ENCODE measurements at regions of chr11 and their contacts with region 1.

Region 1: DNA sequence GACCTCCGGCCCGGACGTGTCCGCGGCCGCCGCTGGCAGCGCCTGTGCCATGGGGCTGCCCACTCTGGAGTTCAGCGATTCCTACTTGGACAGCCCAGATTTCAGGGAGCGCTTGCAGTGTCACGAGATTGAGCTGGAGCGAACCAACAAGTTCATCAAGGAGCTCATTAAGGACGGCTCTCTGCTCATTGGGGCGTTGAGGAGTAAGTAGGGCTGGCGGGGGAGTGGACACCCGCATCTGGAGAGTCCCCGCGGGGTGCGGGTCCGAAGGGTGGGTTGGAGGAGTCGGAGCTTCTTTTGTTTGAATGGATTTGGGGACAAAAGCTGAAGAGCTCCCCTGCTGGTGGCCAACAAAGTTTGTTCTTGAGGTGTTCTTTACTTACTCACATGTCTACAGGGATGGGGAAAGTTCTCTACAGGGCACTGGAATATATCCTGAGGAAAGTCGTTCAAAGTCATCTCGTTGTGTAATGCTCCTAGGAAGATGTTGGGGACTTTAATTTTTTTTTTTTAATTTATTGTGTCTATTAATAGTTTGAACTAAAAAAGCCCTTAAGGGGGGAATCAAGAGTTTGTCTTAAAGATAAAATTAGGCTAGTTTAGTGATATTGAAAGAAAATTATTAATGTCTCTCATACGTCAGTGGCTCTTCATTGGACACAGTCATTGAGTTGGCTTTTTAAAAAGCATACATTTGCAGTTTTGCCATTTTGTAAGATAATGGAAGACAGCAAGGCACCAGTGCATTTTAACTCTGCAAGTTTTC is 725 bp downstream of the ARHGAP42 start:
- DNase-seq: peak; percentile 50 to 77 (median 57)
- H3K4me3 ChIP-seq: peak overlapping the region; percentile 59 to 96 (median 80)
- H3K27ac ChIP-seq: peak overlapping the region in 4 of 5 donors; percentile 53 to 79 (median 55)
- H3K4me1 ChIP-seq: peaks cover 0 to 6% of the 10 kb centered on the region in 2 donors
- H3K27me3 ChIP-seq: no peaks in the 10 kb centered on the region
- CTCF ChIP-seq: peak; percentile 47 to 74 (median 61)
- POLR2A ChIP-seq: no peak

Region 2: GRCh38 chr11:100855466-100856067 is 167.8 kb after region 1 on chr11:
- intact Hi-C with region 1: loop called (anchors 5 to 10 kb)
- DNase-seq: no peak
- H3K4me3 ChIP-seq: no peak overlapping the region
- H3K27ac ChIP-seq: no peak overlapping the region
- H3K4me1 ChIP-seq: peaks cover 0 to 6% of the 10 kb centered on the region in 2 donors
- H3K27me3 ChIP-seq: no peaks in the 10 kb centered on the region
- CTCF ChIP-seq: peak; percentile 51 to 81 (median 64)
- POLR2A ChIP-seq: no peak

Region 3: GRCh38 chr11:101061606-101062005 is 373.8 kb after region 1 on chr11:
- intact Hi-C with region 1: no loop called
- DNase-seq: no peak
- H3K4me3 ChIP-seq: no peak overlapping the region
- H3K27ac ChIP-seq: no peak overlapping the region
- H3K4me1 ChIP-seq: no peaks in the 10 kb centered on the region
- H3K27me3 ChIP-seq: no peaks in the 10 kb centered on the region
- CTCF ChIP-seq: no peak
- POLR2A ChIP-seq: no peak